Right ventricle myocardium superior (tissue), 1 donor: ENCODE measurements at regions of chr19 and their contacts with region 1.

Region 1: DNA sequence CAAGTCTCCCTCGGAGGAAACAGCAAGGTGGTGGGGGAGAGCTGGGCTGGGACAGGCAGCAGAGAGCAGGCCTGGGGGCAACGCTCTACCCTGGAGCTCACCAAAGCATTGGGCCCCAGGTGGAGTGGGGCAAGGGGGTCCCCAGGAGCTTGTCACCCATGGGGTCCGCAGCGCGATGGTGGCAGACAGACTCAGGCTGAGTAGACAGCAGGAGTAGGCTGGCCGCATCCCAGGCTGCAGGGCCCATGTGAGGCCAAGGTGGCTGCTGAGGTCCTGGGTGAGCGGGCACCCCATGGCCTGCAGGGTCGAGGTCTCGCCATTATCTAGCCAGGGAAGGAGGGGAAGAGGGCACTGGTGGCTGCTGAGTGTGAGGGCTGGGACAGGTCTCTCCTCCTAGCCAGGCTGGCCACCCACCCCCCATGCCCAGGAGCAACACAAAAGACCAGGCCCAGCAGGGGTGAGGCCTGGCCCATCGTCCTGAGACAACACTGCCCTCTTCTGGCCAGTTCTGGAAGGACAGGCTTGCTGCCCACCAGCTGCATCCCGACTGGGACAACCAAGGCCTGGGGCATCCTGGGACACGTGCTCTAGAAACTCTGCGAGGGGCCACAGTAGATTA is 33.1 kb downstream of the CEBPG start:
- DNase-seq: peak; percentile 84
- ATAC-seq: peak; percentile 77

Region 2: DNA sequence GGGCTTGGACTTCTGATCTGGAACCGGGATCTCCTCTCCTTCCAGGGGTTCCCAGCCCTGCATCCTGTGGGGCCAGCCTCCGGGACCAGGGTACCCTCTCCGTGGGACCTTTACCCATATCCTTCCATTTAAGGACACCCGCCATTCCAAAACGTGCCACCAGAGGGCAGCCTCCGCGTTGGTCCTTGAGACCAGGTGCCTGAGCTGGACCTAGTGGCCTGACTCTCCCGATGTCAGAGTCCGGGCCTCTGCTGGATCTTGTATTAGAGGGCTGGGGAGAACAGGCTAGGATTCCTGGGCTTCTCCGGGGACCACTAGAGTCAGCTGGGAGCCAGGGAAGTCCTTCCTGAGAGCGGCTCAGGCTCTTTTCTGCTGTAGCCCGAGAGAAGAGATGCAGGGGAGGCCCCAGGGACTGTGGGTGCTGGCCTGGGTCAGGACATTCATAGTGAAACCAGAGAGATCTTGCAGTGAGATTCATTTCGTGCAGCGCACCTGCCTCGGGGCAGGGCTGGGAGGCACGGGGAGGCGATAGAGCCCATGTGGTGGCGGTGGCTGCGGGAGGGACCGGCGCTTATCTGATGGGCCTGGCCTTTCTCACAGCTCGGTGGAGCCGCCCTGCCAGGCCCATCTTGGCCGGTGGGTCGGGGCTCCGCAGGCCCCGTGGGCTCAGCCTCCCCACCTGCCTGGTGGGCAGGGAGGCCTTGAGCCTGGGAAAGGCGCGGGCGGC is 171.2 kb before region 1 on chr19:
- intact Hi-C with region 1: loop called (anchors 2 kb)
- DNase-seq: peak; percentile 89
- ATAC-seq: peak; percentile 89